A549 (cell line): ENCODE measurements at regions of chr10 and their contacts with region 1.

Region 1: GRCh38 chr10:30722956-30723620 is 93.5 kb upstream of the LYZL2 start:
- DNase-seq: no peak
- ATAC-seq: no peak
- H3K4me3 ChIP-seq: no peak overlapping the region
- H3K27ac ChIP-seq: no peak overlapping the region
- H3K4me1 ChIP-seq: no peaks in the 10 kb centered on the region
- CTCF ChIP-seq: no peak
- EP300 ChIP-seq: no peak
- POLR2A ChIP-seq: no peak
- RAD21 ChIP-seq: no peak

Region 2: GRCh38 chr10:30553018-30553624 is 170.0 kb before region 1 on chr10:
- CTCF ChIA-PET with region 1: no interaction called
- POLR2A ChIA-PET with region 1: no interaction called
- DNase-seq: no peak
- ATAC-seq: no peak
- H3K4me3 ChIP-seq: no peak overlapping the region
- H3K27ac ChIP-seq: peak overlapping the region; percentile 48 to 87
- H3K4me1 ChIP-seq: peaks cover 14% of the 10 kb centered on the region
- CTCF ChIP-seq: no peak
- EP300 ChIP-seq: no peak
- POLR2A ChIP-seq: no peak
- RAD21 ChIP-seq: no peak

Region 3: GRCh38 chr10:30736685-30737232 is 13.7 kb after region 1 on chr10:
- CTCF ChIA-PET with region 1: interaction called, 19 read pairs
- POLR2A ChIA-PET with region 1: no interaction called
- DNase-seq: peak; percentile 64 to 90
- ATAC-seq: peak; percentile 95
- H3K4me3 ChIP-seq: no peak overlapping the region
- H3K27ac ChIP-seq: peak overlapping the region; percentile 31 to 78
- H3K4me1 ChIP-seq: peaks cover 14% of the 10 kb centered on the region
- CTCF ChIP-seq: no peak
- EP300 ChIP-seq: peak in 1 of 2 experiments; percentile 46; a peak in 1 of 5 replicates
- POLR2A ChIP-seq: no peak
- RAD21 ChIP-seq: no peak

Region 4: GRCh38 chr10:30840406-30841050 is 117.4 kb after region 1 on chr10:
- CTCF ChIA-PET with region 1: no interaction called
- POLR2A ChIA-PET with region 1: no interaction called
- DNase-seq: no peak
- ATAC-seq: no peak
- H3K4me3 ChIP-seq: no peak overlapping the region
- H3K27ac ChIP-seq: no peak overlapping the region
- H3K4me1 ChIP-seq: no peaks in the 10 kb centered on the region
- CTCF ChIP-seq: no peak
- EP300 ChIP-seq: no peak
- POLR2A ChIP-seq: no peak
- RAD21 ChIP-seq: no peak